Panc1 (cell line): ENCODE measurements at regions of chr17 and their contacts with region 1.

Region 1: GRCh38 chr17:41535764-41536481 is 7.8 kb upstream of the KRT19 start:
- DNase-seq: no peak
- ATAC-seq: no peak
- H3K4me3 ChIP-seq: no peak overlapping the region
- H3K27ac ChIP-seq: peak overlapping the region; percentile 70
- H3K4me1 ChIP-seq: peaks cover 68% of the 10 kb centered on the region
- H3K27me3 ChIP-seq: no peaks in the 10 kb centered on the region
- CTCF ChIP-seq: no peak

Region 2: GRCh38 chr17:41521574-41522261 is 14.2 kb before region 1 on chr17:
- CTCF ChIA-PET with region 1: no interaction called
- POLR2A ChIA-PET with region 1: interaction called, 15 read pairs
- in situ Hi-C with region 1: no loop called
- intact Hi-C with region 1: no loop called
- DNase-seq: peak; percentile 74
- ATAC-seq: peak; percentile 63
- H3K4me3 ChIP-seq: peak overlapping the region in 1 of 2 experiments; percentile 9; a peak in 1 of 4 replicates
- H3K27ac ChIP-seq: peak overlapping the region; percentile 96
- H3K4me1 ChIP-seq: peaks cover 86% of the 10 kb centered on the region
- H3K27me3 ChIP-seq: no peaks in the 10 kb centered on the region
- CTCF ChIP-seq: no peak